Activated CD4-positive, alpha-beta T cell treated with anti-CD3 and anti-CD28 coated beads for 36 hours (primary cell): ENCODE measurements at regions of chr11 and their contacts with region 1.

Region 1: DNA sequence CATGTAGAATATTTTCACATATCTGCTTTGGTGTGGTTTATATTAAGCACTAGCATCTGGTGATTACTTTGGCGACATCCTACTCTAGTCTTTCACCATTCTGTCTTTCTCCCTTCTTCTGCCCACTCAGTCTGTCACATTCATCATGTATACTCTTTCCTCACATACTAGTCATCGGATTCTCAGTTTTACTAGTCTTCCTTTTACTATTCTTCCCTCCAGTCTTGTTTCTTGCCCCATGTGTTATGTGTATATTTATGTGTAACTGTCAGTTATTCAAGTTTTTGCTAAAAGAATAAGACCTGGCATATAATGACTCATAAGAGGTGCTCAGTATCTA is 4.6 kb upstream of the DIXDC1 start:
- DNase-seq: no peak
- ATAC-seq: peak; percentile 73
- H3K4me3 Mint-ChIP-seq: peak overlapping the region; percentile 28
- H3K27ac Mint-ChIP-seq: peak overlapping the region; percentile 88
- H3K4me1 Mint-ChIP-seq: peaks cover 40% of the 10 kb centered on the region
- H3K27me3 Mint-ChIP-seq: no peaks in the 10 kb centered on the region

Region 2: DNA sequence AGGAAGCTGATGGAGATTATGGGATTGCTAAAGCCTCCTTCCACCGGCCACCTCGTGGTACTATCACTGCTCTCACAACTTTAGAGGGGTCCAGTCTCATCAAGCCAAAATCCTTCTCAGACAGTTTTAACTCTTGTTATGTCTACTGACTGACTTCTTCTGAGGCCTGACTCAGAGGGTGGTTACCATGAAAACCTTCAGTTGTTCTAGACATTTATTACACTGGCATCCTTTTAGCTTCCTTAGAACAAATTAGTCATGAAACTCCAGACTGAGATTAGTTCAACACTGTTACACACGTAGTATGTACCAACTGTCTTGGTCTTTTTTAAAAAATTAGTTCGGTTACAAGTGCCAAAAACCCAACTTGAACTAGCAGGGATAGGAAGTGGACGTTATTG is 12.1 kb after region 1 on chr11:
- CTCF ChIA-PET with region 1: interaction called, 21 read pairs
- POLR2A ChIA-PET with region 1: interaction called, 5 read pairs
- intact Hi-C with region 1: loop called (anchors 1 kb)
- DNase-seq: peak; percentile 31
- ATAC-seq: peak; percentile 93
- H3K4me3 Mint-ChIP-seq: peak overlapping the region; percentile 29
- H3K27ac Mint-ChIP-seq: peak overlapping the region; percentile 94
- H3K4me1 Mint-ChIP-seq: peaks cover 27% of the 10 kb centered on the region
- H3K27me3 Mint-ChIP-seq: no peaks in the 10 kb centered on the region

Region 3: DNA sequence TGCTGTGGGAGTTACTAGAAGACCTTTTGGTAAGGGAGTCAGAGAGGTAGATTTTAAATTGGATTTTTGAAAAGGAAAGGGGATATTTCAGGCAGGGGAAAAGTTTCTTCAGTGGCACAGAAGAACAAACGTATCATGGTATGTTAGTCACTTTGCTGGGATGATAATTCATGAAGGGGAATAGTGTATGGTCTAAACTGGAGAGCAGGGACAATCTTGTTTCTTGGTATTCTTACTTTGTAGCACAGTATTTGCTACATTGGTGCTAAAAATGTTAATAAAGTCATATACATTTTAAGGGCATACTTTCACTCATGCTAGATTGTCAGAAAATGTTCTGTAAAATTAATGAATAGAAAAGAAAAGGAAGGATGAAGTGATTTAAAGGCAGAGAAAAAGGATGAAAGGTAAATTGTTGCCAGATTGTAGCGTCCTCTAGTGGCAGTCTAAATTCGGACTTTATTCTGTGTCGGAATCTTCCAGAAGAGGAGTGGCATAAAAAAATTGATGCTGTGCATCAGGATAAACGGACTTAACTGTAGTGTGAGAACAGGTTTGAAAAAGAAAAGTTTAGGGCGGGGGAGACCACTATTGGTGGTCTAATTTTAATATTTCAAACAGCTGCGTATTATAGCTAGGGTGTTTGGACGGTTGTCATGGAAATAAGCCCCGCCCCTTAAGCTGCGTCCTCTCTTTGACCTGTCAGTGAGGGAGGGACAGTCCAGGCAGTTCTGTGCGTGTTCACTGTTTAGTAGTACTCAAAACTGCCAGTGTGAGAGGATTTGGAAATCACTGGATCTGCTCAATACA is 242.4 kb after region 1 on chr11 and contains the start of gene BCO2:
- CTCF ChIA-PET with region 1: no interaction called
- POLR2A ChIA-PET with region 1: interaction called, 3 read pairs
- intact Hi-C with region 1: loop called in 1 of 2 experiments (anchors 1 kb)
- DNase-seq: peak; percentile 70
- ATAC-seq: peak; percentile 81
- H3K4me3 Mint-ChIP-seq: peak within 1 kb of the TSS; percentile 54
- H3K27ac Mint-ChIP-seq: no peak within 1 kb of the TSS
- H3K4me1 Mint-ChIP-seq: peaks cover 11% of the 10 kb centered on the region
- H3K27me3 Mint-ChIP-seq: peaks cover 22% of the 10 kb centered on the region
- total RNA-seq, gene BCO2: 0.63 to 0.75 TPM